Activated T-helper 1 cell treated with anti-CD3 and anti-CD28 coated beads, Interleukin-12 subunit alpha, Interleukin-12 subunit beta, Interleukin-2, Interleukin-4 antibody, amounts not matched to agents 30 ng/mL and 10 ng/mL and 1 ng/mL, durations not matched to agents 14 hours and 24 hours and 36 hours (primary cell): ENCODE measurements at regions of chr14 and their contacts with region 1.

Region 1: DNA sequence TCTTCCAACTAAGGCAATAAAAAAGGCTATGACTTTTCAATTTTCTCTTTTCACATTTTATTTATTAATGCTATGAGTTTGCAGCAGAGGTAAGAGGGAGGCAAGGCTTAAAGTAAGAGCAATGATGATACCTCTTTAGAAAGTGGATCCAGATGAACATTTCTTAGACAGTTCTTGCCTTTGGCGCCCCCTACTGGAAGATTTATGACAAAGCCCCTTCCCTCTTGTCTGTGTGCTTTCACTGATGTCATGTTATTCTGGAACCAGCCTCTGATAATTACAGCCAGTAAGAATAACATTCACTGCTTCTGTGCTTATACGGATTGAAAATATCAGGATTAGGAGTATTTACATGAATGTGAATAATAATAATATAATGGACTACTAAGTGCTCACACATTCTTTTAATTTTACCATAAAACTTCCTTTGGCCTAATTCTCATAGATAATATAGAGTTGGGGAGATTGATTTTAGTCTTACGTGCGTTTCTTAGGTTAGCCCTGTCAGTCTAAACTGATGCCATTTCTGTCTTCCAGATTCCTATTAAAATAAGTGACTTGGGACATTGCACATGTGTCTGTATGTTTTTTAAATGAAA is 1929.9 kb upstream of the SEL1L start:
- DNase-seq: no peak
- H3K4me3 Mint-ChIP-seq: no peak overlapping the region
- H3K27ac Mint-ChIP-seq: no peak overlapping the region
- H3K4me1 Mint-ChIP-seq: no peaks in the 10 kb centered on the region
- H3K27me3 Mint-ChIP-seq: no peaks in the 10 kb centered on the region

Region 2: GRCh38 chr14:82710267-82710841 is 753.2 kb before region 1 on chr14:
- intact Hi-C with region 1: loop called (anchors 10 kb)
- DNase-seq: peak; percentile 5
- H3K4me3 Mint-ChIP-seq: no peak overlapping the region
- H3K27ac Mint-ChIP-seq: no peak overlapping the region
- H3K4me1 Mint-ChIP-seq: no peaks in the 10 kb centered on the region
- H3K27me3 Mint-ChIP-seq: no peaks in the 10 kb centered on the region

Region 3: DNA sequence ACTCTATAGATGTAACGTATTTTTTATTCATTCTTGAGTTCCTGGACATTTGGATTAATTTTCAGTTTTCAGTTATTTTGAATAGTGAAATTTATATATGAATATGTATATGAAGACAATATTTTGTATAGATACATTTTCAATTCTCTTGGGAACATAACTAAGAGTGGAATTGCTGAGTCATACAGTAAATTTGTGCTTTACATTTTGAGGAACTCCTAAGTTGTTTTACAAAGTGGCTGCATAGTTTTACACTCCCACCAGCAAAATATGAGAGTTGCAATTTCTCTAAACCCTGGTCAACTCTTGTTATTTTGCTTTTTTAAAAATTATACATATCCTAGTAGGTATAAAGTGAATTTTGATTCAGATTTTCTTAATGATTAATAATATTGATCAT is 91.3 kb before region 1 on chr14:
- intact Hi-C with region 1: no loop called
- DNase-seq: no peak
- H3K4me3 Mint-ChIP-seq: no peak overlapping the region
- H3K27ac Mint-ChIP-seq: no peak overlapping the region
- H3K4me1 Mint-ChIP-seq: no peaks in the 10 kb centered on the region
- H3K27me3 Mint-ChIP-seq: no peaks in the 10 kb centered on the region